ENCODE measurements at regions of chr1 and their contacts with region 1.

Region 1: DNA sequence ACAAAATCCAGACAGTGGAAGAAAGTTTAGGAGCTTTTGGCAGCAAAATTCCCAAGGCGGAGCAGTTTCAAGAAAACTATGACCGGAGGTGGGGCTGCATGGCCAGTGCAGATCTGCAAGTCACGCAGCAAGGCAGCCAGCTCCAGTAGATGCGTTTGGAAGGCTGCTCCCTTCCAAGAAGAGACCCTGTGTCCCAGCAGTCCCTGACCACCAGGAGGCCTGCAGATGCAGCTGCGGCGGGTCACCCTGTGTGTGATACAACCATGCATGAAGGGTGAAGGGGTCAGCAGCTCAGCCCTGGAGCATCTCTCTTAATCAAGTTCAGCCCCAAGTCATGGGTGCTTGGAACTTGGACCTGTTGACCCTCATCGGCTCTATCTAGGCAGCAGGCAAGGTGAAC is 29.3 kb downstream of the GPR157 start:
- DNase-seq: no peak
- H3K4me3 ChIP-seq: no peak overlapping the region
- H3K27ac ChIP-seq: no peak overlapping the region
- H3K4me1 ChIP-seq: peaks cover 19% of the 10 kb centered on the region
- H3K27me3 ChIP-seq: no peaks in the 10 kb centered on the region
- CTCF ChIP-seq: no peak

Region 2: GRCh38 chr1:8910914-8911313 is 188.6 kb before region 1 on chr1:
- intact Hi-C with region 1: loop called (anchors 10 kb)
- DNase-seq: no peak
- H3K4me3 ChIP-seq: no peak overlapping the region
- H3K27ac ChIP-seq: no peak overlapping the region
- H3K4me1 ChIP-seq: no peaks in the 10 kb centered on the region
- H3K27me3 ChIP-seq: no peaks in the 10 kb centered on the region
- CTCF ChIP-seq: no peak

Region 3: DNA sequence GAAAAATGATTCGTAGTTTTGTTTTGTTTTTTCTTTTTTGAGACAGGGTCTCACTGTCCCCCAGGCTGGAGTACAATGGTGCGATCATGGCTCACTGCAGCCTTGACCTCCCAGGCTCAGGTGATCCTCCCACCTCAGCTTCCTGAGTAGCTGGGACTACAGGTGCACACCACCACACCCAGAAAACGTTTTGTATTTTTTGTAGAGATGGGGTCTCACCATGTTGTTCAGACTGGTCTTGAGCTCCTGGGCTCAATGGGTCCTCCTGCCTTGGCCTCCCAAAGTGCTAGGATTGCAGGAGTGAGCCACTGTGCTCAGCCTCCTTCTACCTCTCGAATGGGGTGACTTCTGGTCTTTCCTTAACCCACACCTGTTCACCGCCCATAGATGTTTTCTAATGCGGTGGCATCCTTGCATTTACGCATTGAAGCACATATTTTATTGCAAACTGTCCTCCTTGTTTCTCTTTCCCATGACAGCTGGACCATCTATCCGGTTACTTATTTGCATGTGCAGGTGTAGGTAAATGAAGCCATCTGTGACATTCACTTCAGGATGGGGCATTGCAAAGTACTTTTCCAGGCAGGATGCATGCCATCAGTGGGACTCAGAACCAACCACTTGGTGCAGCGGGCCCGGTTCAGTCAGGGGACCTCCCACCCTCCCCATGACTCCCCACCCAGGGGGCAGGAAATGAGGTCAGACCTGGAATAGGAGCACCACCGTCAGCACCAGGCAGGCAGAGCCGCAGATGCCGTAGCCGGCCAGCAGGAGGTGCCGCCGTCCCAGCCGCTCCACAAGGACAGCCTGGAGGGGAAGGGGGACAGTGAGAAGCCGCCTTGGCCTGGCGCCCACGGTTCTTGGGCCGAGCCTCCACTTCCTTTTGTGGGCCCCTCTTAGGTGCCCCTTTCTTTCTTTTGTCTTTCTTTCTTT is 89.9 kb before region 1 on chr1:
- intact Hi-C with region 1: loop called (anchors 10 kb)
- DNase-seq: no peak
- H3K4me3 ChIP-seq: no peak overlapping the region
- H3K27ac ChIP-seq: peak overlapping the region; percentile 56
- H3K4me1 ChIP-seq: peaks cover 23% of the 10 kb centered on the region
- H3K27me3 ChIP-seq: no peaks in the 10 kb centered on the region
- CTCF ChIP-seq: peak; percentile 60

Measured in left ventricle myocardium inferior (tissue), 1 donor.